ENCODE measurements at regions of chr6 and their contacts with region 1.

Region 1: DNA sequence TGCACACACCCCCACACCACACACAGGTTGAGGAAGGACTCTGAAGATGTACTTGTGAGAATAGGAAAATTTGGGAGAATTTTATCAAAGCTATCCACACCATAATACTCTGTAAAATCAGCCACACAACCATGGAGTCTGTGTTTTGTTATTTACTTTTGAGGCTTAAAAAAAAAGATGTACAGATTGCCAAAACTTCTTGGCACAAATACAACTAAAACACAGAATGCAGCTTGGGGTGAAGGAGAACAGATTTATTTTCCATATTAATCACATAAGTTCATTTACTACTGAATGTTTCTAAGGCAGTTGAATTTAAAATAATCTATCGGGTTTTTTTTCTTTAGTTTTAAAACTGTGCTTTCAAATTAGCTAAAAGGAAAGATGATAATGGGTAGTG is 32.8 kb upstream of the KCNQ5 start:
- DNase-seq: no peak
- ATAC-seq: no peak
- H3K4me3 Mint-ChIP-seq: no peak overlapping the region
- H3K27ac Mint-ChIP-seq: no peak overlapping the region
- H3K4me1 Mint-ChIP-seq: no peaks in the 10 kb centered on the region
- H3K27me3 Mint-ChIP-seq: no peaks in the 10 kb centered on the region
- CTCF ChIP-seq: no peak

Region 2: GRCh38 chr6:72418495-72418894 is 170.6 kb before region 1 on chr6:
- CTCF ChIA-PET with region 1: no interaction called
- POLR2A ChIA-PET with region 1: interaction called, 12 read pairs
- DNase-seq: no peak
- ATAC-seq: 0 out of 2 replicates have a peak, but pooled peaks have one; percentile 25
- H3K4me3 Mint-ChIP-seq: no peak overlapping the region
- H3K27ac Mint-ChIP-seq: no peak overlapping the region
- H3K4me1 Mint-ChIP-seq: peaks cover 30% of the 10 kb centered on the region
- H3K27me3 Mint-ChIP-seq: no peaks in the 10 kb centered on the region
- CTCF ChIP-seq: no peak

Region 3: GRCh38 chr6:72669324-72669723 is 80.2 kb after region 1 on chr6:
- CTCF ChIA-PET with region 1: no interaction called
- POLR2A ChIA-PET with region 1: no interaction called
- DNase-seq: peak; percentile 21
- ATAC-seq: peak; percentile 93
- H3K4me3 Mint-ChIP-seq: no peak overlapping the region
- H3K27ac Mint-ChIP-seq: no peak overlapping the region
- H3K4me1 Mint-ChIP-seq: 0 out of 2 replicates have a peak, but pooled peaks cover 4% of the 10 kb centered on the region
- H3K27me3 Mint-ChIP-seq: no peaks in the 10 kb centered on the region
- CTCF ChIP-seq: no peak